Adrenal gland (tissue), 19 donors: ENCODE measurements at regions of chr2 and their contacts with region 1.

Region 1: GRCh38 chr2:10412384-10412783 is 35.7 kb downstream of the ODC1 start:
- DNase-seq: no peak
- H3K4me3 ChIP-seq: no peak overlapping the region
- H3K27ac ChIP-seq: no peak overlapping the region
- H3K4me1 ChIP-seq: peaks cover 19% of the 10 kb centered on the region in 2 donors
- H3K27me3 ChIP-seq: no peaks in the 10 kb centered on the region
- CTCF ChIP-seq: no peak
- POLR2A ChIP-seq: no peak

Region 2: GRCh38 chr2:10122386-10123280 is 289.8 kb before region 1 on chr2 and contains the start of gene RRM2:
- intact Hi-C with region 1: loop called in 1 of 2 experiments (anchors 5 kb)
- DNase-seq: peak; percentile 91 to 95 (median 94)
- H3K4me3 ChIP-seq: peak within 1 kb of the TSS in 2 of 4 donors; percentile 24 to 59
- H3K27ac ChIP-seq: no peak within 1 kb of the TSS
- H3K4me1 ChIP-seq: peaks cover 6 to 25% of the 10 kb centered on the region in 2 donors
- H3K27me3 ChIP-seq: peaks cover 11% of the 10 kb centered on the region
- CTCF ChIP-seq: no peak
- POLR2A ChIP-seq: no peak
- total RNA-seq, gene RRM2: 2.0 to 22.3 (median 4.0) TPM

Region 3: GRCh38 chr2:10135296-10136089 is 276.9 kb before region 1 on chr2:
- intact Hi-C with region 1: loop called (anchors 5 kb)
- DNase-seq: no peak
- H3K4me3 ChIP-seq: no peak overlapping the region
- H3K27ac ChIP-seq: no peak overlapping the region
- H3K4me1 ChIP-seq: no peaks in the 10 kb centered on the region
- H3K27me3 ChIP-seq: no peaks in the 10 kb centered on the region
- CTCF ChIP-seq: no peak
- POLR2A ChIP-seq: no peak

Region 4: GRCh38 chr2:10141736-10142642 is 270.4 kb before region 1 on chr2:
- intact Hi-C with region 1: loop called (anchors 5 kb)
- DNase-seq: peak in 6 of 7 donors; percentile 35 to 61 (median 48)
- H3K4me3 ChIP-seq: no peak overlapping the region
- H3K27ac ChIP-seq: no peak overlapping the region
- H3K4me1 ChIP-seq: no peaks in the 10 kb centered on the region
- H3K27me3 ChIP-seq: no peaks in the 10 kb centered on the region
- CTCF ChIP-seq: peak; percentile 48 to 72 (median 68)
- POLR2A ChIP-seq: no peak

Region 5: DNA sequence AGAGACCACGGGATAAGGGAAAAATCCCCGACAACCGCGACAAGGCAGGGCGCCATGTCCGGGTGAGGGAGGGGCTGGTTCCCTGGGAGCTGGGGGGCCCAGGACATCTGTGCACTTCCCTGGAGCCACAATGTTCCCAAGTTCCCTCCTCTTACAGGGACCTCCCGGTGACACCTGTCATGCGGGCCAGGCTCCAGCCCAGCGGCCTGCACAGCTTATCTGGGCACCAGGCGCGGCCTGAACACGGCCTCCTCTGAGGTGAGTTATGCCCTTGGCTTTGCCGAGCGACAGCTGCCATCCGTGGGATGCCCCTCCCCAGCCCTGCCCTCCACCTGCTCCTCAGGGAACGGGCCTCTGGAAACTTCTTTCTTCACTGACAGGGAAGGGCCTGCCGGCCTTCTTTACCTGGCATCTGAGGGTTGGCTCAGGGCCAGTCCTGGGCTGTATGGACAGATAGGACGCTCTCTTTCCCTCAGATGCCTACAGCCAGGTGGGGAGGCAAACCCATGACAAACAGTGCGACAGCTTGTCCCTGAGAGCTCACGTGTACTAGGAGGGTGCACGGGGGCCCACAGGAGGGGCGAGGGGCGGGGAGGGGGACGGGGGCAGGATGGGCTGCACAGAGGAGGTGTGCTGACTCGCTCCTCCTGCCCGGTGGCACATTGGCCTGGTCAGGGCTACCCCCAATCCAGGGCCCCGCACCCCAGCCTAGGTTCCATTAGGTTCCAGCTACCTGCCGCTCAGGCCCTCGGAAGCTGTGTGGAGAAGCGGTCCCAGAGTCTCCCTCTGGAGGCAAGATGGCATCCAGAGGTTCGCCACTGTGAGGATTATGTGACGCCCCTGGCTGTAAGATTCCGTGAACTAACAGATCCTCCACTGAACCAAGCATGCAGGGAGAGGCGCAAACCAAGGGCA is 144.6 kb before region 1 on chr2:
- intact Hi-C with region 1: loop called in 1 of 2 experiments (anchors 5 kb)
- DNase-seq: peak in 4 of 7 donors; percentile 12 to 51 (median 25)
- H3K4me3 ChIP-seq: no peak overlapping the region
- H3K27ac ChIP-seq: no peak overlapping the region
- H3K4me1 ChIP-seq: peaks cover 4 to 18% of the 10 kb centered on the region in 2 donors
- H3K27me3 ChIP-seq: no peaks in the 10 kb centered on the region
- CTCF ChIP-seq: no peak
- POLR2A ChIP-seq: no peak